Activated T-helper 2 cell treated with anti-CD3 and anti-CD28 coated beads, Interferon-gamma antibody, Interleukin-2, Interleukin-4, amounts not matched to agents 10 μg/mL and 5 μg/mL and 100 μg/mL, durations not matched to agents 14 hours and 24 hours and 36 hours (primary cell): ENCODE measurements at regions of chr1 and their contacts with region 1.

Region 1: DNA sequence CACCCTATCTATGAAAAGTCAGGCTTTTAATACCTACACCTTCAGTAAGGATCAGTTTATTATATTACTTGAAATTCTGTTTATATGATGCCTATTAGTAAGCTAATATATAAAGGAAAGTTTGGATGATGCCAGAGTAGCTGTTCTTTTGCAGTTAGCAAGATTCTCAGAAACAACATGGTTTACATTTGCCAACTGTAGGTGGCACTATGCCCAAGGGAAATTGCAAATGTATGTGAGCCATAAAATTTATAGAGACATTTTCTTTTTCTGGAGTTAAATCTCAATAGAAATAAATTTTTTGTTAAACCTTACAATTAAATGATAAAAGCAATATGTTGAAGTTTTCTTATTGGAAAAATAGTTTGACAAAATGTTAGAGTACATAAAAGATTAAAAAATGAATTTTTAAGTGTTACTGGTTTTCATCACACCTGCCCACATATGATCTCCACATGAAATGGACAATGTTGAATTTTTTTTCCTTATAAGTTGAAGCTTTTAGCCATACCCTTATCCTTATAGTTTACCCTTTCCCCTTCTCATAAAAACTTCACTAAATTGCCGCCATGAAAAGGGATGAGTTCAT is 32.1 kb upstream of the EPHX4 start:
- DNase-seq: no peak
- H3K4me3 Mint-ChIP-seq: no peak overlapping the region
- H3K27ac Mint-ChIP-seq: no peak overlapping the region
- H3K4me1 Mint-ChIP-seq: no peaks in the 10 kb centered on the region
- H3K27me3 Mint-ChIP-seq: peaks cover 16% of the 10 kb centered on the region

Region 2: GRCh38 chr1:91948501-91949355 is 49.0 kb before region 1 on chr1:
- intact Hi-C with region 1: loop called (anchors 10 kb)
- DNase-seq: peak; percentile 40
- H3K4me3 Mint-ChIP-seq: peak overlapping the region; percentile 34
- H3K27ac Mint-ChIP-seq: peak overlapping the region; percentile 65
- H3K4me1 Mint-ChIP-seq: peaks cover 16% of the 10 kb centered on the region
- H3K27me3 Mint-ChIP-seq: peaks cover 4% of the 10 kb centered on the region

Region 3: GRCh38 chr1:92291372-92291999 is 293.8 kb after region 1 on chr1:
- intact Hi-C with region 1: loop called (anchors 1 kb)
- DNase-seq: no peak
- H3K4me3 Mint-ChIP-seq: no peak overlapping the region
- H3K27ac Mint-ChIP-seq: no peak overlapping the region
- H3K4me1 Mint-ChIP-seq: peaks cover 26% of the 10 kb centered on the region
- H3K27me3 Mint-ChIP-seq: no peaks in the 10 kb centered on the region

Region 4: GRCh38 chr1:92623187-92623778 is 625.6 kb after region 1 on chr1:
- intact Hi-C with region 1: loop called (anchors 1 kb)
- DNase-seq: no peak
- H3K4me3 Mint-ChIP-seq: no peak overlapping the region
- H3K27ac Mint-ChIP-seq: no peak overlapping the region
- H3K4me1 Mint-ChIP-seq: peaks cover 5% of the 10 kb centered on the region
- H3K27me3 Mint-ChIP-seq: peaks cover 13% of the 10 kb centered on the region